Mammary epithelial cell (primary cell): ENCODE measurements at regions of chr2 and their contacts with region 1.

Region 1: GRCh38 chr2:131034122-131035051 is 58.9 kb downstream of the FAM168B start:
- DNase-seq: peak; percentile 19
- H3K4me3 ChIP-seq: peak overlapping the region in 2 of 3 experiments; percentile 34 to 44
- H3K27ac ChIP-seq: no peak overlapping the region
- H3K4me1 ChIP-seq: peaks cover 20% of the 10 kb centered on the region
- H3K27me3 ChIP-seq: no peaks in the 10 kb centered on the region
- CTCF ChIP-seq: no peak

Region 2: DNA sequence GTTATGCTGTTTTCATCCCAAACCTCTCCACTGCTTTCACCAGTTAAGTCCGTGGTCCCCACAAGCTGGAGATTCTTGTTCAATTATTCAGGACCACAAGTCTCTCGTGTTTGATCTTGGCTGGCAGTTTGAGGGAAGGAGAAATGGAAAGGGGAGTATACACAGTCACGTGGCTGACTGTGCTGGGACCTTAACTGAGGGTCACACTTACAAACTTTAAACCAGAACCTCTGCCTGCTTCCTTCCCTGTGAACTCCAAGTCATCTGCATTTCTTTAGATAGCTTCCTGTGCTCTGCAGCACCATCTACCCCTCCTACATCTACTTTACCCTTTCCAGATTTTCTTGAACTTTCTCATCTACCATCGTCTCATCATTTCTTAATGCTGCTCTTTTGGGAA is 106.0 kb before region 1 on chr2:
- CTCF ChIA-PET with region 1: no interaction called
- dilution Hi-C with region 1: loop called (anchors 5 kb)
- in situ Hi-C with region 1: no loop called
- intact Hi-C with region 1: no loop called
- DNase-seq: no peak
- H3K4me3 ChIP-seq: no peak overlapping the region
- H3K27ac ChIP-seq: no peak overlapping the region
- H3K4me1 ChIP-seq: no peaks in the 10 kb centered on the region
- H3K27me3 ChIP-seq: no peaks in the 10 kb centered on the region
- CTCF ChIP-seq: no peak

Region 3: DNA sequence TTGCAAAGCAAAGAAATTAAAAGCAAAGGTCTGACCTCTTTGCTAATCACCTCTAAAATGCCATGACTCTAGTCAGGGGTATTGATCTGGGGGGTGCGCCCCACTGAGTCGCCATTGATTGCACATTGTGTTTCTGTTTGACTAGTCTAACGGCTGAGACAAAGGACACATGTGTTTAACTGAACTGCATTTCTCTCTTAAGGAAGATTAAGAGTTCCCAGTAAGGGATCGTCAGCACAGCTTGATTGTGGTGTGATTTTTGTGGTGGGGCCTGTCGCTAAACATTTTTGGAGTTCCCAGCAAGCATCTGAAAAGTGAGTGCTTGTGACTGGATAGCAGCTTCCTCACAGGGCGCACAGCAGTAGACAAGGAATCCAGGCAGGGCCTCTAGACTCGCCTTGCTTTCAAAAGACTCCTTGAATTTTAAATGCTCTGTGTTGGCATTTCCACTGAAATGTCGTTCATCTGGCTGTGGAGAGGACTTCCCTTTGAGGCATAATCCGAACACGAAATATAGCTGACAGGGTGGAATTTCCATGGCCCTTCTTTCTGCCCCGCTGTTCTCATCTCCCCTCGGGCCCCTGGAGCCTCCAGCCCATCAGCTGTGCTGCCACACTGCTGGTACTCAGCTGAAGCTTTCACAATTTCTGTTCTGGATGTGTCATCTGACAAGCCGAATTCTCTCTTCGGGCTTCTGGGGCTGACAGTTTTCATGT is 67.5 kb before region 1 on chr2:
- CTCF ChIA-PET with region 1: no interaction called
- dilution Hi-C with region 1: loop called (anchors 5 kb)
- in situ Hi-C with region 1: no loop called
- intact Hi-C with region 1: no loop called
- DNase-seq: no peak
- H3K4me3 ChIP-seq: no peak overlapping the region
- H3K27ac ChIP-seq: no peak overlapping the region
- H3K4me1 ChIP-seq: peaks cover 4% of the 10 kb centered on the region
- H3K27me3 ChIP-seq: no peaks in the 10 kb centered on the region
- CTCF ChIP-seq: no peak

Region 4: GRCh38 chr2:131076707-131077106 is 42.3 kb after region 1 on chr2:
- CTCF ChIA-PET with region 1: no interaction called
- dilution Hi-C with region 1: no loop called
- in situ Hi-C with region 1: no loop called
- intact Hi-C with region 1: no loop called
- DNase-seq: no peak
- H3K4me3 ChIP-seq: no peak overlapping the region
- H3K27ac ChIP-seq: no peak overlapping the region
- H3K4me1 ChIP-seq: peaks cover 8% of the 10 kb centered on the region
- H3K27me3 ChIP-seq: no peaks in the 10 kb centered on the region
- CTCF ChIP-seq: no peak